ENCODE measurements at regions of chrX and their contacts with region 1.

Region 1: GRCh38 chrX:23317799-23318724 is 16.6 kb upstream of the PTCHD1 start:
- ATAC-seq: peak in 4 of 8 experiments; percentile 11 to 85 (median 67)
- H3K4me3 ChIP-seq: no peak overlapping the region
- H3K27ac ChIP-seq: no peak overlapping the region
- H3K4me1 ChIP-seq: no peaks in the 10 kb centered on the region

Region 2: DNA sequence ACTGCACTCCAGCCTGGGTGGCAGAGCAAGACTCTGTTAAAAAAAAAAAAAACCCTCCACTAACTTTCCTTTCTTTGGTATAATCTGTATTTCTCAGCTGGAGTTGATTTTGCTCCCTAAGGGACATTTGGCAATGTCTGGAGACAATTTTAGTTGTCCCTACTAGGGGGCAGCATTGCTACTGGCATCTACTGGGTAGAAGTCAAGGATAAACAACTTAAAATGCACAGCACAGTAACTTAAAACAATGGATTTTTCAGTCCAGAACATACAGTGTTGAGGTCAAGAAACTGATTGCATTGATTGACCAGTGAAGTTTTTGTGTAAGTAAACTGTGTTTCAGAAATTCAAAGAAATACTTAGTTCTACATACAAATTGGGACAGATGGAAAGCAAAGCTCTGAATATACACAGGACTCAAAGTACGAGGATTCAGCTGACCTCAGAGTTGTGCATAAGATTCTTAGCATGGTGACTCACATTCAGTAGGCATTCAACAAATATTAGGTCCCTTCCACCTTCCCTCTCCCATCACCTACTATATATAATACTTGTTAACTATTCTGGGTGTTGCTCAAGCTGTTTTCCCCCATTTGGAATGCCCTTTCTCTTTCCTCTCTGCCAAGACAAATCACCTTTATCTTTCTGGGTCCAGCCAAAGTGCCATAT is 309.5 kb before region 1 on chrX:
- in situ Hi-C with region 1: loop called in 2 of 9 experiments (anchors 25 kb)
- ATAC-seq: peak in 4 of 8 experiments; percentile 30 to 78 (median 49)
- H3K4me3 ChIP-seq: no peak overlapping the region
- H3K27ac ChIP-seq: no peak overlapping the region
- H3K4me1 ChIP-seq: no peaks in the 10 kb centered on the region

Measured in motor neuron (in vitro differentiated cells).